Panc1 (cell line): ENCODE measurements at regions of chr5 and their contacts with region 1.

Region 1: DNA sequence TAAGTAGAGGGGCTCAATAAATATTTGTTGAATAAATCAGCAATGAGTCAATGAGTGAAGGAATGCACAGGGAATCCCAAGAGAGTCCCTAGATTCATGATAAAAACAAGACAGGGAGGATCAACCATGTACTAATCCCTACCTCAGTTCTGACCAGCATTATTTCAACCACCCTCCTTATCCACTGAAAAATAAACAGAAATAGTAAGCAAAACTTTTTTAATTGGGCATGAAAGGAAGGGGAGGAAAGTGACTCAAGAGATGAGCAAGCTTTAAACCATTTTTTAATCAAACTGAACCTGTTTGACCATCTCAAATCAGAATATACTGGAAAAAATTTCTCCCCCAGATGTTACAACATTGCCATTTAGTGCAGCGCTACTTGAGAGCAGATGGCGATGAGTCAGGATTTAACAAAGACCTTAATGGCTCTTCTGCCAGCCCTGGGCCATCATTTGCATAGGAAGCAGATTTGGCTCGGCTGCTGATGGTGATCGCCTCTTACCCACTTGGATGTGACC is 194.8 kb upstream of the SLC30A5 start:
- DNase-seq: no peak
- ATAC-seq: no peak
- H3K4me3 ChIP-seq: no peak overlapping the region
- H3K27ac ChIP-seq: no peak overlapping the region
- H3K4me1 ChIP-seq: no peaks in the 10 kb centered on the region
- H3K27me3 ChIP-seq: no peaks in the 10 kb centered on the region
- CTCF ChIP-seq: no peak

Region 2: GRCh38 chr5:68725905-68726683 is 172.9 kb before region 1 on chr5:
- CTCF ChIA-PET with region 1: no interaction called
- POLR2A ChIA-PET with region 1: no interaction called
- in situ Hi-C with region 1: no loop called
- intact Hi-C with region 1: no loop called
- DNase-seq: no peak
- ATAC-seq: no peak
- H3K4me3 ChIP-seq: no peak overlapping the region
- H3K27ac ChIP-seq: no peak overlapping the region
- H3K4me1 ChIP-seq: no peaks in the 10 kb centered on the region
- H3K27me3 ChIP-seq: no peaks in the 10 kb centered on the region
- CTCF ChIP-seq: no peak

Region 3: GRCh38 chr5:68942169-68942568 is 43.2 kb after region 1 on chr5:
- CTCF ChIA-PET with region 1: interaction called, 10 read pairs
- POLR2A ChIA-PET with region 1: no interaction called
- in situ Hi-C with region 1: no loop called
- intact Hi-C with region 1: no loop called
- DNase-seq: no peak
- ATAC-seq: no peak
- H3K4me3 ChIP-seq: no peak overlapping the region
- H3K27ac ChIP-seq: no peak overlapping the region
- H3K4me1 ChIP-seq: no peaks in the 10 kb centered on the region
- H3K27me3 ChIP-seq: no peaks in the 10 kb centered on the region; the same call in 1 of the 2 replicates
- CTCF ChIP-seq: no peak